Activated CD8-positive, alpha-beta T cell treated with anti-CD3 and anti-CD28 coated beads for 36 hours (primary cell): ENCODE measurements at regions of chr7 and their contacts with region 1.

Region 1: DNA sequence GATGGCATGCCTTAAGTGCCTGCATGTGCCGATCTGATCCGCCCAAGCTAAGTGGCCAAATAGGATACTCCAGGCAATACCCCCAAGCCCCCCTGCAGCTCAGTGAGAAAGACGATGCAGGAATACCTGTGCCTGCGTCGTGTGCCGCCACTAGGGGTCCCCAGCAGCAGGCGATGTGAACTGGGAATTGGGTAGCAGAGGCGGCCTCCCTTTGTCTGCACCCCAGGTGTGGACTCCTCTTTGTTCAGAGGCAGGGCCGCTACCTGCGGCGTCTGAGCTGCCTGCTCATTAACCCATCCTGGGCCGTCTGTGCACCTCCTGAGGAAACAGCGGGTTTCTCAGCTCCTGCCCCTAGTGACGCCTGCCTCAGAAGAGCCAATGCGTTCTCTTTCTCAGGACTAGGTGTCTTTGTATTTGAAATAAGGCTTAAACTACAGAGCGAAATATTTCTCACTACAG is 4.8 kb upstream of the CHN2 start:
- DNase-seq: peak; percentile 75
- ATAC-seq: peak; percentile 72
- H3K4me3 Mint-ChIP-seq: no peak overlapping the region
- H3K27ac Mint-ChIP-seq: no peak overlapping the region
- H3K4me1 Mint-ChIP-seq: no peaks in the 10 kb centered on the region
- H3K27me3 Mint-ChIP-seq: peaks cover 17% of the 10 kb centered on the region
- CTCF ChIP-seq: peak; percentile 87

Region 2: GRCh38 chr7:28926871-28927597 is 262.7 kb before region 1 on chr7:
- CTCF ChIA-PET with region 1: interaction called, 17 read pairs
- POLR2A ChIA-PET with region 1: no interaction called
- intact Hi-C with region 1: no loop called
- DNase-seq: peak; percentile 67
- ATAC-seq: peak; percentile 88
- H3K4me3 Mint-ChIP-seq: peak overlapping the region; percentile 78
- H3K27ac Mint-ChIP-seq: peak overlapping the region; percentile 51
- H3K4me1 Mint-ChIP-seq: peaks cover 20% of the 10 kb centered on the region
- H3K27me3 Mint-ChIP-seq: peaks cover 6% of the 10 kb centered on the region
- CTCF ChIP-seq: peak; percentile 75

Region 3: DNA sequence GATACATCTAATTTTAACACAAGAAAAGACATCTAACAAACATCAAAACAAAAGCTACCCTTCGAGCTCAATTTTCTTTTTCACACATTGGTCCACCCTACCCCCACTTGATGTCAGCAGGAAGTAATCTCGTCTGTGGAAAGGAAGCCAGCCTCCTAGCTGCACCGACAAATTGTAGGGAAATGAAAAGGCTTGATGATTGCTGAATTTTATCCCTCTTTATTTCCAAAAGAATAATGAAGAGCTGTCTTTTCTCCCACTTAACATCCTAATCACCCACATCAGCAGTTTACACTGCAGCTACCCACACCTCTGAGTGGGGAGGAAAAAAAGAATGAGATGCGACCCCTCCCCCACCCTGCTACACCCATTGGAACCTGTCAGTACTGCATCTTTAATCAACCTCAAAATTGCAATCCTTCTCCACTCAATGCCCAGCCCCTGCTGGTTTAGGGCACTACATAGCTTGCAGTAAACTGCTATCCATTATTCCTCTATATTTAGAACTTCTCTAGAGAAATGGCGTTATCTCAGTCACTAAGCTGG is 32.8 kb before region 1 on chr7:
- CTCF ChIA-PET with region 1: interaction called, 15 read pairs
- POLR2A ChIA-PET with region 1: no interaction called
- intact Hi-C with region 1: no loop called
- DNase-seq: peak; percentile 6
- ATAC-seq: peak; percentile 24
- H3K4me3 Mint-ChIP-seq: peak overlapping the region; percentile 9
- H3K27ac Mint-ChIP-seq: no peak overlapping the region
- H3K4me1 Mint-ChIP-seq: peaks cover 10% of the 10 kb centered on the region
- H3K27me3 Mint-ChIP-seq: peaks cover 7% of the 10 kb centered on the region
- CTCF ChIP-seq: peak; percentile 11

Region 4: GRCh38 chr7:29207162-29207801 is 17.5 kb after region 1 on chr7:
- CTCF ChIA-PET with region 1: interaction called, 25 read pairs
- POLR2A ChIA-PET with region 1: interaction called, 3 read pairs
- intact Hi-C with region 1: no loop called
- DNase-seq: peak; percentile 20
- ATAC-seq: peak; percentile 90
- H3K4me3 Mint-ChIP-seq: no peak overlapping the region
- H3K27ac Mint-ChIP-seq: peak overlapping the region; percentile 20
- H3K4me1 Mint-ChIP-seq: peaks cover 18% of the 10 kb centered on the region
- H3K27me3 Mint-ChIP-seq: no peaks in the 10 kb centered on the region
- CTCF ChIP-seq: no peak

Region 5: DNA sequence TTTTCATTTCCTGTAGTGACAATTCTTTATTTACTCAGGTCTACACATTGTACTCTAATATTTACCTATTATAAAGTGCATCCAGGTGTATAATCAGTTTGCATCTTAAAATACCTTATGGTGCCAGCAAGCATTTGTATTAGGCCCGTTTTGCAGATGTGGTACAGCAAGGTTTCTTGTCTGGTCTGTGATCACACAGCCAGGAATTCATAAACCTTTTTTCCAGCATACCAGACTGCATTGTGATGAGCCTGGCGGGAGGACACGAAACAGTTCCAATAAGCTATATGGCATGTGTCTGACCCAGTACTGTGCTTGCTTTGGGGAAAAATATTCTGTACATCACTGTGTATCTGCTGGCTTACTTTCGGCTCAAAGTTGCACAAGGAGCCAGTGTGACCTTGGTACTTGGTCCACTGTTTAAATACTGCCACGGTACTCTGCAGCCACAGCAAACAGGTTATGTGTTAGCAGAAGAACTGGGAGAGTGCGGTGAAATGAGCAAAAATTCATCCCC is 41.1 kb after region 1 on chr7:
- CTCF ChIA-PET with region 1: interaction called, 13 read pairs
- POLR2A ChIA-PET with region 1: interaction called, 3 read pairs
- intact Hi-C with region 1: no loop called
- DNase-seq: no peak
- ATAC-seq: no peak
- H3K4me3 Mint-ChIP-seq: no peak overlapping the region
- H3K27ac Mint-ChIP-seq: no peak overlapping the region
- H3K4me1 Mint-ChIP-seq: peaks cover 23% of the 10 kb centered on the region
- H3K27me3 Mint-ChIP-seq: no peaks in the 10 kb centered on the region
- CTCF ChIP-seq: no peak

Region 6: GRCh38 chr7:29345600-29345999 is 155.8 kb after region 1 on chr7:
- CTCF ChIA-PET with region 1: interaction called, 18 read pairs
- POLR2A ChIA-PET with region 1: no interaction called
- intact Hi-C with region 1: no loop called
- DNase-seq: peak; percentile 52
- ATAC-seq: peak; percentile 39
- H3K4me3 Mint-ChIP-seq: no peak overlapping the region
- H3K27ac Mint-ChIP-seq: no peak overlapping the region
- H3K4me1 Mint-ChIP-seq: no peaks in the 10 kb centered on the region
- H3K27me3 Mint-ChIP-seq: no peaks in the 10 kb centered on the region
- CTCF ChIP-seq: no peak

Region 7: GRCh38 chr7:29764227-29764626 is 574.5 kb after region 1 on chr7:
- CTCF ChIA-PET with region 1: no interaction called
- POLR2A ChIA-PET with region 1: no interaction called
- intact Hi-C with region 1: no loop called
- DNase-seq: peak; percentile 2
- ATAC-seq: no peak
- H3K4me3 Mint-ChIP-seq: no peak overlapping the region
- H3K27ac Mint-ChIP-seq: no peak overlapping the region
- H3K4me1 Mint-ChIP-seq: no peaks in the 10 kb centered on the region
- H3K27me3 Mint-ChIP-seq: peaks cover 4% of the 10 kb centered on the region
- CTCF ChIP-seq: no peak